Head of caudate nucleus (tissue), 42 donors: ENCODE measurements at regions of chr13 and their contacts with region 1.

Region 1: DNA sequence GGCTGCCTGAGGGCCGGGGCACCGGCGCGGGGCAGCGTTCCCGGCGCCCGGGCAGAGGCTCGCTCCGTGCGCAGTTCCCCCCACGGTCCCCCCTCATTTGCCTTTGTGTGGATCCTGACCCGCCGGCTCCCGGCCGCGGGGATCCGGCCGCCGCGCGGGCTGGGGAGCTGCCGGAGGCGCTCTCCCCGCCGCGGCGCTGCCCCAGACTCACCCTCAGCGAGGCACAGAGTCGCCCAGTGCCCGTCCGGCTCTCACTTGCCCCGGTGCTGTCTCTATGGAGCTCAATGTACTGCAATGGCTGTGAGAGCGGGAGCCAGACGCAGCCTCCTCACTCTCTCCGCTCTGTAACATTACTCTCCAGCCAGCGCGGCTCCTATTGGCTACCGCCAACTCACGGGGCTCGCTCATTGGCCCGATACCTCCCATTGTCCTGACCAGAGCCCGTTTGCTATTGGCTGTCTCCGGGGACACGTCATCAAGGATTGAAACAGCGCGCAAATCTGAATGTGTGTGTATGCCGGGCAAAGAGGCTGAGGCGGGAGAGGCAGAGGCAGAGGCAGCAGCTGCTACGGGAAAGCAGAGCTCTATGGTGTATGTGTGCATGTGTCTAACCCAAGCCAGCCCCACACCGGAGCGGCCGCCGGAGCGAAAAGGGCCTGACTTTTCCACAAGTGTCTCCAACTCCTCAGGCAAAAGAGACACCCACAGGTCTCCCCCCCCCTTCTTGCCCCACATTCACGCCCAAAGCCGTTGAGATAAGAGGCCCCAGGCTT is at the start of gene HMGB1:
- DNase-seq: peak; percentile 96 to 100 (median 100)

Region 2: GRCh38 chr13:30132623-30133553 is 332.9 kb before region 1 on chr13:
- intact Hi-C with region 1: loop called (anchors 10 kb)
- DNase-seq: peak; percentile 94 to 100 (median 98)

Region 3: DNA sequence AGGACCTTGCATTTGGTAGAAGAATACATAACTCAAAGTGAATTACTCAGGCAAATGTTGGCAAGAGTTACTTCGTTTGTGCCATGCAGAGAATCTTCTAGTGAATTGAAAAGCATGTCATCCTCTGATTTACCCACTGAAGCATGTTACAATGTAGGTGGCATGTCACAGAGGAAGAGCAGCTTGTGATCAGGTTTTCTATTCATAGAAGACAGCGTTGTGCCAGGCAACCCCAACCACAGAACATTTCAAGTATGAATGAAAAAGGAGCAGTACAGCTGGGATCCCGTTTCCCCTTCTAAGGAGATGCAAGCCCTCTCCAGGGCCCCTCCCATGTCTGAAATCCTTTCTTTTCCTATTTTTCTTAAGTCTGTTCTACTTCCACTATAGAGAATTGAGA is 152.5 kb before region 1 on chr13:
- intact Hi-C with region 1: loop called (anchors 10 kb)
- DNase-seq: peak in 5 of 42 donors; percentile 10 to 41 (median 22)

Region 4: DNA sequence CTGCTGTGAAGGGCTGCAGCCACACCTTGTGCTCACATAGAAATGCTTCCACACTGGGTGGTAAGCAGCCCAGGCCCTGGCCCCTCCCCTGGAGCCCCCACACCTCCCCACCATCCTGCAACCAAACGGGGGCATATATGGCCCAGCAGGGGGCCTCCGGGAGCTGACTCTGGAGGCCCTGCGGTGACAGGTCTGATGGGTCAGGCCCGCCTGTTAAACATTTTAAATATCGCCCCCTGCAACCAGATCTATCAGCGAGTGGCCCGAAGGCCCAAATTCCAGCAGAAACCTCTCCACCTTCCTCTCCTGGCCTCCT is 110.4 kb before region 1 on chr13:
- intact Hi-C with region 1: no loop called
- DNase-seq: peak in 1 of 42 donors; percentile 26

Region 5: DNA sequence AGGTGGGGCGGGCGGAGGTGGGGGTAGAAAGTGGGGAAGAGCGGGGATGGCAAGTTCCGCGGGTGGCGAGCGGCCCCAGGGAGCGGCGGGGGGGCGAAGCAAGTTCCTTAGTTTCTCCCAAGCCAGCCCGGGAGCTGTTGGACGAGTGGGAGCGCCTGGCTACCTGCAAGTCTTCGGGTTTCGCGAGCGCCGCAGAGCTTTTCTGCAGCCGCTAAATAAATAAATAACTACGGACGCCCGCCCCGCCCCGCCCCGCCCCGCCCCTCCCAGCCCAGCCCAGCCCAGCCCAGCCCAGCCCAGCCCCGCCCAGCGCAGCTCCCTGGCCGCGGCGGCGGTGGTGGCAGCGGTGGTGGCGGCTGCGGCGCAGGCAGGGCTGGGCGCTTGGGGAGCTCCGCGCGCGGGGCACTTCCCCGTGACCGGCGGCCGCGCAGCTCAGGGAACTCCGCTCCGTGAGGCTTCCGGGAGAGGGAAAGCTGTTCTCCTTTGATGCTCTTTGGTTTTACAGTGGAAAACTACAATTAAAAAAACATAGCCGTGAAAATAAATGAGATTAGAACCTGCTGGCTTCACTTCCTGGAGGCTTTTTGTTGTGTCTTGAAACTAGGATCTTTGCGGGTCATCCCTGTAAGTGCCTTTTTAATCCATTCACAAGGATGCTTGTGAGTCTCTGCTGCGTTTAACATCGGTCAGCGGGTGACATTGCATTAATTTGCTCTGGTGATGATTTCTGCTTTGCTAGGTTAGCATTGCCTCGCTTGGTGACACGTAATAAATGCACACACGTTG is 43.5 kb before region 1 on chr13 and contains the start of gene UBE2L5:
- intact Hi-C with region 1: loop called (anchors 5 kb)
- DNase-seq: peak in 41 of 42 donors; percentile 37 to 91 (median 80)

Region 6: DNA sequence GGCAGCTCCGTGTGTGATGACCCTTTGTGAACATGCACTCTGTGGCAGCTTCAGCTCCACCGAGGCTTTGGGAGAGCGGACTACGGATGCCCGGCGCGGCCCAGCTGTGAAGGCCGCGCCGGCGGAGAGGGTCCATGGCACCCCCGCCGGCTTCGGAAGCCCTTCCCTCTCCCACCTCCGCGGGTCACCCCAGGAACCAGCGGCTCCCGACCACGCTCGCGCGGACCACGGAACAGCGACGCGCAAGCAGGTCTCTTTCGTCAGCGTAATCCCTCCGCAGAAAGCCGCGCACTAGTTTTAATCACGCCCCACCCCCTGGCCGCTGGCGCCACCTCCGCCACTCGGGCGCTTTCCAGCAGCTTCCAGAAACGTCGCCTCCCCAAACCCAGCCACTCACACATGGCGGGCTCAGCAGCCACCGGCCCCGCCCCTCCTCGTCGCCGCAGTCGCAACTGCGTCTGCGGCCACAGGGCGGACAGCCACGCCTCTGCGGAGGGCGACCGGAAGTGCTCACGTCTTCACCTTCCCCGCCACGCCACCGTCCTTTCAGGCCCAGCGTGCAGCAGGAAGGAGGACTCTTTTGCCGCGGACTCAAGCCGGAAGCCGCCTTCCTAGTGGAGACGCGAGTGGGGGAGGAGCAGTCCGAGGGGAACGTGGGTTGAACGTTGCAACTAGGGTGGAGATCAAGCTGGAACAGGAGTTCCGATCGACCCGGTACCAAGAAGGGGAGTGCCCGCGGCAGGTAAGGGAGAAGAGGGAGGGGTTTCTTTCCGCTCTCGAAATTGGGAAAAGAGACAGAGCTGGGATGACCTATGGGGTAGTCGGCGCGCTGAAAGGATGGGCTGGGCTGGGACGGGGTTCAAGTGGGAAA is 151.8 kb after region 1 on chr13 and contains the start of gene USPL1:
- intact Hi-C with region 1: loop called (anchors 2 kb)
- DNase-seq: peak; percentile 92 to 99 (median 97)

Region 7: DNA sequence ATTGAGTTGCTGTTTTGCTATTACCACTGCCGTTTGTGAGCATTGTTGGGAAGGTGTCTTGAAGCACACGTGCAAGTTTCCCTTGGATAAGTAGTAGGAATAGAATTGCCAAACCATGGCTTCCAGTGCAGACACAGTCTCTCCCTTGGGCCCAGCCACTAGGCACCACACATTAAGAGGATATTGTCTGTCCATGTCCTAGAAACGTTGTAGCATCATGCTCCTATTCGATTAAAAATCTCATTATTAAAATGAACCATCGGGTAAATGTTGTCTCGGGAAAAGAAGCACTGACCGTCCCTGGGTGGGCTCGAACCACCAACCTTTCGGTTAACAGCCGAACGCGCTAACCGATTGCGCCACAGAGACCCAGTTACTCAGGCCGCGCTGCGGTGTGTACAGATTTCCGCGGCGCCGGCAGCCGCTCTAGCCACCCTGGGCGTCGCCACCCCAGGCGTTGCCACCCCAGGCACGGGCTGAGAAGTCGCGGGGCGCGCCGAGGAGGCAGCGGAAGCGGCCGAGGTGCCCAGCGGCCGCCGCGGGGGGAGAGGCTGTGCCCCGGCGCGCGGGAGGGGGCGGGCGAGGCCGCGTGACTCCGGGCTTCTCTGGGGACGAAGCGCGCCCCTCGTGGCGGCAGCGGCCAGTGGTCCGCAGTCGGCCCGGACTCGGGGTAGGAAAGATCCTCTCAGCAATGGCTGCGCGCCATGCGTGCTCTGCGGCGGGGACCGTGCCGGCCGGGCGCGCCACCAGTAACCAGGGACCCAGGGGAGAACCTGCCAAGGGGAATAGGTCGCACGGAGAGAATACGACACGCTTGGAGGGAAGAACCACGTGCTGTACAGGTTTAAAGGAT is 208.1 kb after region 1 on chr13:
- intact Hi-C with region 1: loop called (anchors 10 kb)
- DNase-seq: peak; percentile 74 to 95 (median 90)

Region 8: GRCh38 chr13:30802953-30803478 is 337.2 kb after region 1 on chr13:
- intact Hi-C with region 1: loop called (anchors 10 kb)
- DNase-seq: peak; percentile 80 to 96 (median 90)